ENCODE measurements at regions of chr15 and their contacts with region 1.

Region 1: GRCh38 chr15:59247364-59247763 is 40.7 kb downstream of the LDHAL6B start:
- DNase-seq: peak; percentile 83
- ATAC-seq: peak; percentile 90
- H3K4me3 Mint-ChIP-seq: no peak overlapping the region
- H3K27ac Mint-ChIP-seq: peak overlapping the region; percentile 55
- H3K4me1 Mint-ChIP-seq: peaks cover 35% of the 10 kb centered on the region
- H3K27me3 Mint-ChIP-seq: peaks cover 1% of the 10 kb centered on the region

Region 2: DNA sequence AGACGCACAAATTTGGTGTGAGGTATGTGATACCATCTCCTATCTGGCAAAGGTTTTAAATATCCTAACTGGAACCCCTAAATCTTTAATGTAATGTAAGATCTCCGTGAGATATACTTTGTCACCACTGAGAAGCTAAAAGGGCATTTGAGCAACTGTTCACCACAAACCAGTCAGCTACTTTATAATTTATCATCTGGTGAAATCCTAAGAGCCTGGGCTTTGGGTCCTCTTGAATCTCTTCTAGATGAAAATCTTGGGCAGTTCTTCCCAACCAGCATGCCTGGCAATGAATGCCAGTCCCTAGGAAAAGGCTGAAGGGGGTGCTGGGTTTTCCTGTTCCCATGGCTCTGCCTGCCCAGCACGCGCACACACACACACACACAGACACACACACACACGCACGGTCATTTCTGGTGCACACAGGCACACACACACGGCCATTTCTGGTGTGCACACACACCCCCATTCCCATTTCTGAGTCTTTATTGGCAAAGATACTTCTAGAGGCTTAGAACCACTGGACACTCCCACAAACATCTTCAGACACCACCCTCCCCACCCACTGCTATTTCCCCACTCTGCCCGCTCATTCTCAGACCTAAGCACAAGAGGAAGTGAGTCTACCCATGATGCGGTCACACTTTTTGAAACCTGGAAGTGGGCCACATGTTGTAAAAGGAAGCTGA is 52.7 kb after region 1 on chr15:
- CTCF ChIA-PET with region 1: interaction called, 27 read pairs
- POLR2A ChIA-PET with region 1: no interaction called
- DNase-seq: peak; percentile 90
- ATAC-seq: peak; percentile 96
- H3K4me3 Mint-ChIP-seq: peak overlapping the region; percentile 59
- H3K27ac Mint-ChIP-seq: peak overlapping the region; percentile 88
- H3K4me1 Mint-ChIP-seq: peaks cover 70% of the 10 kb centered on the region
- H3K27me3 Mint-ChIP-seq: no peaks in the 10 kb centered on the region

Region 3: DNA sequence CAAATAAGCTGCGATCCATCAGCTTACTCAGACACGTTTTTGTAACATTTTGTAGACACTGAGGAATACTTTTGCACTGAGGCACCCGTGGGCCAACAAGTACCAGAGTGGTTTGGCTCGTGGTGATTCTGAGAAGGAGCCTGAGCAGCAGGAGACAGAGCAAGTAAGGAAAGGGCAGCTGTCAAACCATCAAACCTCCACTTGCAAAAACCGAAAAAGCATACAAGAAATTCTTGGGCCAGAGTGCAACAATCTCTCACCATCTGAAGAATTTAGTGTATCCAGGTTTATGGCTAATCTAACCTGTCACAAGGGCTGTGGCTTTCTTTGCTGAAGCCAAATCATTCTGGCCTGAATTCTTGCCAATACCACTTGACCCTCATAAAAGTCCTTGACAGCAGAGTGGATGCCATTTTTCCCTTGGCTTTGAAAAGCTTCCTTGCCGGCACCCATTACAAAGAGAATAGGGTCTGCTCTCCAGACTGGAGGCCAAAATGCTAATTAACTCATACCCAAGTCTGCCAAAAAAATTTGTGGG is 68.6 kb after region 1 on chr15:
- CTCF ChIA-PET with region 1: interaction called, 10 read pairs
- POLR2A ChIA-PET with region 1: no interaction called
- DNase-seq: no peak
- ATAC-seq: no peak
- H3K4me3 Mint-ChIP-seq: no peak overlapping the region
- H3K27ac Mint-ChIP-seq: no peak overlapping the region
- H3K4me1 Mint-ChIP-seq: peaks cover 33% of the 10 kb centered on the region
- H3K27me3 Mint-ChIP-seq: peaks cover 5% of the 10 kb centered on the region